ENCODE measurements at regions of chr10 and their contacts with region 1.

Region 1: GRCh38 chr10:29598851-29599311 is 35.9 kb downstream of the SVIL start:
- DNase-seq: no peak

Region 2: GRCh38 chr10:28949005-28950004 is 649.6 kb before region 1 on chr10:
- intact Hi-C with region 1: no loop called
- DNase-seq: no peak

Region 3: GRCh38 chr10:29634764-29635625 is 36.1 kb after region 1 on chr10 and contains the start of gene SVIL:
- intact Hi-C with region 1: loop called (anchors 5 kb)
- DNase-seq: peak; percentile 88
- total RNA-seq, gene SVIL: 518 TPM

Region 4: DNA sequence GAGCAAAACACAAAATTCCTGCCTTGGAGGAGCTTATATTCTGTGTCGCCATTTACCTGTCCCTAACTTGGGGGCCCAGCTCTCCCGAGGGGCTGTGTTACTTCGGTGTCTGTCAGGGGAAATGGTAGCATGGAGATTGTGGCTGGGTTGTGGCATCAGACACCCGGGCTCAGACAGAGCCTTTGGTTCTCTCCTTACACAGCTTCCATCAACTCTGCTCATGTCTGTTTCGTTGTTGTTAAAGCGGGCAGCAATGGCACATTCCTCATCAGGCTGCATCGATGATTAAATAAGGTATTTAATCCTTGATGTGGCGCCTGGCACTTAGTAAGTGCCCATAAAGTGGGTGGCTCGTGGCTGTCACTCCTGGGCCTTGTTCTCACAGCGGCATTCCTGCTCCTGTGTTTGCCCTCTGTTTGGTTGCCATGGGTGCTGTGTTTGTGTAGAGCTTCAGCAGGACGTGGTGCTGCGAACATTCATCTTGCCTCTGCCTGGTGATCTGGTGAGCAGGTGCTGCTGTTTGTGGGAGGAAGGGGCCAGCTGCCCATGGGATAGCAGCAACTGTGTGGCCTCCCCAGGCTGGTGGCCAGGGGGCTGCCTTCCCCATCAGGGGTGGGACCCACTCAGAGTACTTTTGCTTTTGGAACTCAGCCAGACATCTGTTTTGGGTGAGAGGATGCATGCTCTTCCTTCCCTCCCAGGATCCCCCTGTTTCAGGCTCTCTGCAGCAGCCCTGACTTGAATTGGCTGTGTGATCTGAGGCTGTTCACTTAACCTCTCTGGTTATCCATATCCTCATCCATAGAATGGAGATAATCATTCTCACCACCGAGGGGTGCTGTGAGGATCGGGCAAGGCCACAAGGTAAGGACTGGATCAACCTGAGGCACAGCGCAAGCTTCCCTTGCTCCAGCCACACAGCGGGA is 243.1 kb after region 1 on chr10:
- intact Hi-C with region 1: no loop called
- DNase-seq: peak; percentile 78

Measured in cardiac septum (tissue), 1 donor.